ENCODE measurements at regions of chr9 and their contacts with region 1.

Region 1: GRCh38 chr9:76302947-76303940 is 91.0 kb downstream of the RFK start:
- DNase-seq: no peak
- ATAC-seq: peak; percentile 61

Region 2: DNA sequence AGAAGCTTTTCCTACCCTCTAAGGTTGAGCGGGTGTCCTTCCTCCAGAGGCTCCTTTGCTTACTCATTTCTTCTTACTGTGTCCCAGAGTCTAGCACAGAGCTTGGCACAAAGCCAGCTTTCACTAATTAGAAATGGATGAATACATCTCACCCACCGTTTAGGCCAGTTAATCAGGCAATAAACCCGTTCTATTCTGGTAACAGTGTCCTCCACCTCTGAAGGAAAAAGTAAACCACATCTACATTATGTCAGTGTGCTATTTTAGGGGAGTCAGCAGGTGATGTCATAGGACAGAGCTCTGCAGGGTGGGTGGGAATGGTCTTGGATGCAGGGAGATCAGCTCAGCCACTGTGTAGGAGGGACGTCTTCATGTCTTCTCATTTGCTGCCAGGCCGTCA is 1105.7 kb before region 1 on chr9:
- intact Hi-C with region 1: loop called (anchors 10 kb)
- DNase-seq: no peak
- ATAC-seq: no peak

Region 3: DNA sequence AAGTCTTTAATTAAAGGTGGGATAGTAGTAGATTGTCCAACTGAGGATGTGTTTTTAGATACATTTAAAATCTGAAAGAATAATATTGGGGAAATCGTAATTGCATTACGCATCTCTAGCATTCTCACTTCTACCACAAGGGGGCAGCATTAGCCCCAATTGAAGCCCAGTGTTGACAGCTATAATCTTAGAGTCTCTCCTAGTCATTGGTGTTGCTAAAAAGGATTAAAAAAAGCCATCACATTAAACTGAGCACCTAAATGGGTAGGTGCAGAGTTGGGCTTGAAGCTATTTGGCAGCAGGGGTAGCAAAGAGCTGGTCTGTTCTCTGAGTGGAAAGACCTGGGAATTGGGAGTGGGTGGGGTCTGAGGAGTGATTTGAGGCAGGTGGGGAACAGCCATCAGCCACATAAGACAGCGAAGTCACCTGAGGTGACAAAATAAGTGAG is 1037.7 kb before region 1 on chr9:
- intact Hi-C with region 1: loop called (anchors 5 kb)
- DNase-seq: no peak
- ATAC-seq: peak; percentile 75

Region 4: DNA sequence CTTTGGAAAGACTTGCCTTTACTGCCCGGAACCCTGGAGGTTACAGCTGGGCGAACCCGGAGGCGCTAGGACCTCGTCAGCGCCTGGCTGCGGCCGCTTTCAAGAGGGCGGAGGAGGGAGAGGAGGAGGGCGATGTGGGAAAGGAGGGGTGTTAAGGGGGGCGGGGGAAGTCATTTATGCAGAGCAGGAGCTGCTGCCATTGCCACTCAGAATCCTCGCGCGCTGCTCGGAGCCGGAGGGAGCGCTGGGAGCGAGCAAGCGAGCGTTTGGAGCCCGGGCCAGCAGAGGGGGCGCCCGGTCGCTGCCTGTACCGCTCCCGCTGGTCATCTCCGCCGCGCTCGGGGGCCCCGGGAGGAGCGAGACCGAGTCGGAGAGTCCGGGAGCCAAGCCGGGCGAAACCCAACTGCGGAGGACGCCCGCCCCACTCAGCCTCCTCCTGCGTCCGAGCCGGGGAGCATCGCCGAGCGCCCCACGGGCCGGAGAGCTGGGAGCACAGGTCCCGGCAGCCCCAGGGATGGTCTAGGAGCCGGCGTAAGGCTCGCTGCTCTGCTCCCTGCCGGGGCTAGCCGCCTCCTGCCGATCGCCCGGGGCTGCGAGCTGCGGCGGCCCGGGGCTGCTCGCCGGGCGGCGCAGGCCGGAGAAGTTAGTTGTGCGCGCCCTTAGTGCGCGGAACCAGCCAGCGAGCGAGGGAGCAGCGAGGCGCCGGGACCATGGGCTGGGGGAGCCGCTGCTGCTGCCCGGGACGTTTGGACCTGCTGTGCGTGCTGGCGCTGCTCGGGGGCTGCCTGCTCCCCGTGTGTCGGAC is 412.6 kb before region 1 on chr9 and contains the start of gene PCSK5:
- intact Hi-C with region 1: loop called (anchors 10 kb)
- DNase-seq: peak; percentile 92
- ATAC-seq: peak; percentile 97
- total RNA-seq, gene PCSK5: 3.4 TPM

Region 5: GRCh38 chr9:76032038-76032796 is 271.0 kb before region 1 on chr9:
- intact Hi-C with region 1: no loop called
- DNase-seq: no peak
- ATAC-seq: no peak

Region 6: DNA sequence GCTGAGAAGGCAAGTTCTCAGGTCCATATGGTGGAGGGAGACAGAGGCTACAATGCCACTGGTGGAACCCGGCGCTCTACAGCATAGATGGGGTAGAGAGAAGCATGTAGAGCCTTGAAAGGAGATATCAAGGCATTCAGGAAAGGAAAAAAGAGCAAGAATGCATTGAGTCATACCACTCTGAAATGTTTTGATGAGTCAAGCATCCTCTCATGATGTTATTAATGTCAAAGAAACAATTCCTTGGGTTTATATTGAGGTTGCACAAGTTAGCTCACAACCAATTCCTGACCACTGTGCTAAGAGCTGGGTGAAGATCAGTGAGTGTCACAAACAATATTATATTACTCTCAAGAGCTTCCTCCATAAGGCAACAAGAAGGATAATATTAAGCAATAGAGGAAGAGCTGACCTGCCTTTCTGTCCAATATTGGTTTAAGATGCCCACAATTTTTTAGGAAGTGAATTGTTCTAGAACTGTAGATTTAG is 87.0 kb before region 1 on chr9:
- intact Hi-C with region 1: loop called (anchors 10 kb)
- DNase-seq: no peak
- ATAC-seq: no peak

Measured in Right ventricle myocardium superior (tissue), 1 donor.